Calu3 (cell line): ENCODE measurements at regions of chr19 and their contacts with region 1.

Region 1: DNA sequence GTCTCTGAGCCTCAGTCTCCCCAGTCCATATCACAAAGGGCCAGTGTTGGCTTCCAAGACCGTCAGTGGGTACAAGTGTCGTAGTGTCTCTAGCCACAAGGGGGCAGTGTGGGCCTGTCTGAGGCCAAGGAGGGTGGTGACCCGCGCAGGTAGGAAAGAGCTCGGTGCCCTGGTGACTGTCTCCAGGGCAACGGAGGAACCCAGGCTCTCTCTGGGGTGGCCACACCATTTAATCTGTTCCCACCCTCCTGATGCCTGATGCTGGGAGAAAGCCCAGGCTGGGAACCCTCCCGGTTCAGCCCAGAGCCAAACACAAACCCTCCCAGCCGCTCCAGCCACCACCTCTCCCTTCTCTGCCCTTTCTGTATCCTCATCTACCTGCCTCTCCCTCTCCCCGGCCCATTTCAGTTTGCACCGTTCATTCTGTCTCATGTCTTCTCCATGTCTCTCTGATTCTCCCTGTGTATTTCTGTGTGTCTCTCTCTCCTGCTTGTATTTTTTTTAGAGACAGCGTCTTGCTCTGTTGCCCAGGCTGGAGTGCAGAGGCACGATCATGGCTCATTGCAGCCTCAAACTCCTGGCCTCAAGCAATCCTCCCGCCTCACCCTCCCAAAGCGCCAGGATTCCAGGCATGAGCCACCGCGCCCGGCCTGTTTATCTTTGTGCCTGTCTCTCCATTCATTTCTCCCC is 17.5 kb upstream of the MEIS3 start:
- DNase-seq: peak; percentile 92
- H3K4me3 Mint-ChIP-seq: no peak overlapping the region
- H3K27ac Mint-ChIP-seq: no peak overlapping the region
- H3K4me1 Mint-ChIP-seq: peaks cover 12% of the 10 kb centered on the region
- H3K27me3 Mint-ChIP-seq: peaks cover 98% of the 10 kb centered on the region
- CTCF ChIP-seq: peak; percentile 95

Region 2: GRCh38 chr19:47267350-47267759 is 169.5 kb before region 1 on chr19:
- CTCF ChIA-PET with region 1: no interaction called
- intact Hi-C with region 1: no loop called
- DNase-seq: no peak
- H3K4me3 Mint-ChIP-seq: no peak overlapping the region
- H3K27ac Mint-ChIP-seq: no peak overlapping the region
- H3K4me1 Mint-ChIP-seq: peaks cover 4% of the 10 kb centered on the region
- H3K27me3 Mint-ChIP-seq: no peaks in the 10 kb centered on the region
- CTCF ChIP-seq: no peak

Region 3: GRCh38 chr19:47483800-47484690 is 47.2 kb after region 1 on chr19 and contains the start of gene KPTN:
- CTCF ChIA-PET with region 1: interaction called, 21 read pairs
- intact Hi-C with region 1: no loop called
- DNase-seq: peak; percentile 94
- H3K4me3 Mint-ChIP-seq: peak within 1 kb of the TSS; percentile 97
- H3K27ac Mint-ChIP-seq: peak within 1 kb of the TSS; percentile 100
- H3K4me1 Mint-ChIP-seq: peaks cover 14% of the 10 kb centered on the region
- H3K27me3 Mint-ChIP-seq: no peaks in the 10 kb centered on the region
- CTCF ChIP-seq: peak; percentile 99
- total RNA-seq, gene KPTN: 22.8 and 24.0 TPM in 2 replicates

Region 4: GRCh38 chr19:47514869-47515588 is 78.2 kb after region 1 on chr19 and contains the start of gene NAPA:
- CTCF ChIA-PET with region 1: interaction called, 10 read pairs
- intact Hi-C with region 1: no loop called
- DNase-seq: peak; percentile 100
- H3K4me3 Mint-ChIP-seq: peak within 1 kb of the TSS; percentile 98
- H3K27ac Mint-ChIP-seq: peak within 1 kb of the TSS; percentile 89
- H3K4me1 Mint-ChIP-seq: peaks cover 27% of the 10 kb centered on the region
- H3K27me3 Mint-ChIP-seq: no peaks in the 10 kb centered on the region
- CTCF ChIP-seq: peak; percentile 96
- total RNA-seq, gene NAPA: 158 and 181 TPM in 2 replicates

Region 5: GRCh38 chr19:47608074-47608918 is 171.4 kb after region 1 on chr19:
- CTCF ChIA-PET with region 1: interaction called, 10 read pairs
- intact Hi-C with region 1: loop called (anchors 2 kb)
- DNase-seq: peak; percentile 99
- H3K4me3 Mint-ChIP-seq: peak overlapping the region; percentile 88
- H3K27ac Mint-ChIP-seq: peak overlapping the region; percentile 70
- H3K4me1 Mint-ChIP-seq: peaks cover 18% of the 10 kb centered on the region
- H3K27me3 Mint-ChIP-seq: peaks cover 11% of the 10 kb centered on the region
- CTCF ChIP-seq: no peak

Region 6: DNA sequence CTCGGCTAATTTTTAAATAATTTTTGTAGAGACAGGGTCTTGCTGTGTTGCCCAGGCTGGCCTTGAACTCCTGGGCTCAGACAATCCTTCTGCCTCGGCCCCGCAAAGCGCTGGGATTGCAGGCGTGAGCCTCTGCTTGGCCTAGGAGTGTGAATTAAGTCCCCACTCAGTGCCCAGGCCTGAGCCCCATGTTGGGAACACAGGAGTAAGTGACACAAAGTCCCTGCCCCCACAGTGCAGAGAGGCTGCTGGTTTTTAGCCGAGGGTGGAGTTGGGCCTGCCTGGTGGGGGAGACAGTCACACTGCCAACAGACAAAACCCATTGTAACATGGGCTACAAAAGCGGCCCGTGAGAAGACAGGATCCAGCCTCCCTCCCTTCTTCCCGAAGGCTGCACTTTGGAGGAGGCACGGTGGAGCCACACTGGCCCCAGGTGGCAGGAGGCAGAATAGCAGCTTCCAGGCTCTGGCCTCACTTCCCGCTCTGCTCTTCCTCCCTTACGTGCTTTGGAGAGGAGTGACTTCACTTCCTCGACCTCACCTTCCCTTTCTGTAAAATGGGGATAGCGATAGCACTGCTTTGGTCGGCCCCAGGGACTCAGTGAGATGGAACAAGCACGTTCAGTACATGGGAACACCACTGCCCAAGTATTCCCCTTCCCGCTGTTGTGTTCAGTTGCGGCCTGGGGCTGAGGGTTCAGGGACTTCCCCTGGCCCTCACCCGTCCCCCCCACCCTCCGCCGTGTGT is 261.2 kb after region 1 on chr19:
- CTCF ChIA-PET with region 1: interaction called, 44 read pairs
- intact Hi-C with region 1: loop called (anchors 1 kb)
- DNase-seq: peak; percentile 88
- H3K4me3 Mint-ChIP-seq: no peak overlapping the region
- H3K27ac Mint-ChIP-seq: no peak overlapping the region
- H3K4me1 Mint-ChIP-seq: no peaks in the 10 kb centered on the region
- H3K27me3 Mint-ChIP-seq: no peaks in the 10 kb centered on the region
- CTCF ChIP-seq: peak; percentile 99

Region 7: DNA sequence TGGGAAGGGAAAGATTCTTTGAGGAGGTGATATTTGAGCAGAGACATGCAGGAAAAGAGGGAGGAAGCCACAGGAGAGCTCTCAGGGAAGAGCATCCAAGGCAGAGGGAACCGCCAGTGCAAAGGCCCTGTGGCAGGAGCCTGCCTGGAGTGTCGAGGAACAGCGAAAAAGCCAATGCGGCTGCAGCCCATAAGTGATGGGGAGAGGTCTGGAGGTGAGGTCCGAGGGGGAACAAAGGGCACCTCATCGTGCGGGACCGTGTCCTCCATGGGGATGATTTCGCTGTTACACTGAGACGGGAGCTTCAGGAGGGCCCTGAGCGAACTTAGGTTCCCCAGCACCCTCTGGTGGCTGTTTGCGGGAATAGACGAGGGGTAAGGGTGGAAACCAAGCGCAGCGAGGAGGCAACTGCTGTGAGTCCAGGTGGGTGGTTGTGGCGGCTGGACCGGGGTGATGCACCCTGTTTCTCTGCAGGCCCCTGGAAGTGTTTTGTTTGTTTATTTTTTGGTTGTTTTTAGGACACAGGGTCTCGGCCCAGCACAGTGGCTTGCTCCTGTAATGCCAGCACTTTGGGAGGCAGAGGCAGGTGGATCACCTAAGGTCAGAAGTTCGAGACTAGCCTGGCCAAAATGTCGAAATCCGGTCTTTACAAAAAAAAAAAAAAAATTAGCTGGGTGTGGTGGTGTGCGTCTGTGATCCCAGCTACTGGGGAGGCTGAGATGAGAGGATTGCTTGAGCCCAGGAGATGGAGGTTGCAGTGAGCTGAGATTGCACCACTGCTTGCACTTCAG is 270.5 kb after region 1 on chr19:
- CTCF ChIA-PET with region 1: interaction called, 98 read pairs
- intact Hi-C with region 1: loop called (anchors 2 kb)
- DNase-seq: peak; percentile 91
- H3K4me3 Mint-ChIP-seq: no peak overlapping the region
- H3K27ac Mint-ChIP-seq: peak overlapping the region; percentile 13
- H3K4me1 Mint-ChIP-seq: no peaks in the 10 kb centered on the region
- H3K27me3 Mint-ChIP-seq: no peaks in the 10 kb centered on the region
- CTCF ChIP-seq: peak; percentile 87